BJ (cell line): ENCODE measurements at regions of chr2 and their contacts with region 1.

Region 1: GRCh38 chr2:207473049-207473930 is 56.5 kb upstream of the CREB1 start:
- DNase-seq: peak; percentile 42
- H3K4me3 ChIP-seq: no peak overlapping the region
- H3K27me3 ChIP-seq: no peaks in the 10 kb centered on the region
- CTCF ChIP-seq: peak; percentile 82

Region 2: GRCh38 chr2:206693399-206694137 is 779.7 kb before region 1 on chr2:
- CTCF ChIA-PET with region 1: interaction called, 12 read pairs
- POLR2A ChIA-PET with region 1: no interaction called
- DNase-seq: peak; percentile 7
- H3K4me3 ChIP-seq: no peak overlapping the region
- H3K27me3 ChIP-seq: peaks cover 2% of the 10 kb centered on the region; the same call in 1 of the 2 replicates
- CTCF ChIP-seq: peak; percentile 59

Region 3: DNA sequence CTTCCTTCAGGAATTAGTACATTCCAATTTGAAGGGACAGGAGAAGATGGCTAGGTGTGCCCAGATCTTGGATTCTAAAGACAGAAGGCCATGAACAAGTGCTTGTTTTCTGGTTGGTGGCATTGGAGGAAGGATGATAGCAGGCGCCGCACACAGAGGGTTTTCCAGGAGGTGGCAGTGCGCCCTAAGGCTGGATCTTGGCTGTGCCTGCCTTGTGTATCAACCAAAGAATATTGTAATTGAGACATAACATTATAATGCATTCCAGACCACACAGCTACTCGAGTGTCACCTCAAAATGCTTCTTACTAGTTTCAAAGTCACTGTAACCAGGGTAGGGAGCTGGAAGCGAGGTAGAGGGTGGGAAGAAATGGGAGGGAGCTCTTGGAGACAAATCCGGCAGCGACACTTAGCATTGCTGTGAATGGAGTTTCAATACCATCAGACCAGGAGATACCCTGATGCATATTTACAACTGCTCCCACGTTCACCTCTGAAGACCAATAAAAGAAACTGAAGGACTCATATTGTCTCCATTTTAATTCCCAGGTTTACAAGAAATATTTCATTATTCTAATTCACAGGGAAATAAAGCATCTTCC is 491.4 kb before region 1 on chr2:
- CTCF ChIA-PET with region 1: interaction called, 84 read pairs
- POLR2A ChIA-PET with region 1: interaction called, 3 read pairs
- DNase-seq: no peak
- H3K4me3 ChIP-seq: no peak overlapping the region
- H3K27me3 ChIP-seq: no peaks in the 10 kb centered on the region
- CTCF ChIP-seq: peak; percentile 91

Region 4: GRCh38 chr2:207155516-207156444 is 317.5 kb before region 1 on chr2:
- CTCF ChIA-PET with region 1: interaction called, 11 read pairs
- POLR2A ChIA-PET with region 1: no interaction called
- DNase-seq: no peak
- H3K4me3 ChIP-seq: no peak overlapping the region
- H3K27me3 ChIP-seq: no peaks in the 10 kb centered on the region
- CTCF ChIP-seq: no peak

Region 5: DNA sequence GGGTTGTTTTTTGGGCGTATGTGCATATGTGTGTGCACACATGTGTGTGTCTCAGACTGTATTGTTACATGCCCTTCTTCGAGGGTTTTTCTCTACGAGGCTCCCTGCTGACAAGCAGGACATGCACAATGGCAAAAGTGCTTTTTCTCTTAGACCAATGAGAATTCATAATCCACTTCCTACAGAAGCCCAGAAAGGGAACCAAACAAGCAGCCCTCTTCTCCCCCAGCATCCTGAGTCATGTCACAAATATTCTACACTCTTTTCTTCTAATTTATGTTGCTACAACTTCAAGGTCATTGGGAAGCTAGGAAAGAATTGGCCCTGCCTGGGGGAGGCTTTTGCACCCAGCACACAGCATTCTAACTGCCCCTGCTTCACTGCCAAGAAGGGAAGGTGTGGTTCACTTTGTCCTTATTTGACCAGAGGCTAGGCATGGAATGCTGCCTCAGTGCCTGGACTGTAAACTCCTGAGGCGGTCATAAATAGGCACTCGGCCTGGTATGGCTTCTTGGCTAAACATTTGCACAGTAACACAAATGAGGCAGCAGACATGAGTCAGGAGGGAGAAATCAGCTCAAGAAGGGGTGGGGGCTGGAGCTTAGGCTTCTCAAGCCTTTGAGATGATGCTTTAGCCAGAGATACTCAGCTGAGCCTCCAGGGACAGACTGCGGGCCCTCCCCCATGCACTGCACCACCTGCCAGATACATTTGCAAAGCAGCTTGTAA is 214.9 kb before region 1 on chr2:
- CTCF ChIA-PET with region 1: interaction called, 13 read pairs
- POLR2A ChIA-PET with region 1: no interaction called
- DNase-seq: peak; percentile 100
- H3K4me3 ChIP-seq: no peak overlapping the region
- H3K27me3 ChIP-seq: no peaks in the 10 kb centered on the region
- CTCF ChIP-seq: peak; percentile 30; the same call in 1 of the 2 replicates

Region 6: GRCh38 chr2:207513551-207514257 is 40.4 kb after region 1 on chr2:
- CTCF ChIA-PET with region 1: no interaction called
- POLR2A ChIA-PET with region 1: no interaction called
- DNase-seq: peak; percentile 100
- H3K4me3 ChIP-seq: no peak overlapping the region
- H3K27me3 ChIP-seq: no peaks in the 10 kb centered on the region
- CTCF ChIP-seq: no peak

Region 7: DNA sequence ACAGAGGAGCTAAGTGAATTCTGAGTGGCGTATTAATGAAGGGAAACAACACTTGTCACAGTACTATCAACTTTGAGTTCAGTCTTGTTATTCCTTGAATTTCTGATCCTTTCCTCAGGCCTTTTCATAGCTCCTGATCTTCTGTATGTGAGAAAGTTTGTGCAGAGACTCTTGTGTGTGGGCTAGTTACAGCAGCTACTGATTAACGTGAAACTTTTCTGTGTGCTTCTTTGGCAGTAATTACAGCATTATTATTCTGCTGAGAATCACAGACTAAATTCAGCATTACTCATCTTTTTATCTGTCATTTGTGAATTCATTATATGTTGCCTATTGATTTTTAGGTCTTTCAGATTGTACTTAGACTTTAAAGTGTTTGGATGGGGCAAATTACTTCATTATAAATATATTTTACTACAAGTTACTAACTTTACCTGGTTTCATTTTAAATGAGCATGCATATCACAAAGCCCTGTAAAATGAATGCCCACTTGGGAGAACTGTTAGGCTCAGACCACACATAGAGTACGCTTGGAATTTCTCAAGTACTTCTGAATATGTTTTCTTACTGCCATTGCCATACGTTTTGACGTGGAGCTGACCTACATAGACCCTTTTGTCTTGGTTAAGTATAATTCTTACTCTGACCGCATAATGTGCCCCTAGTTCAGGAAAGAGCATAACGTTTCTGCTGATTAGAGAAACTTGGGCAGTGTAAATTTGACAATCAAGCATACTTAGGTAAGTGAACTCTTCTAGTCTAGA is 92.6 kb after region 1 on chr2:
- CTCF ChIA-PET with region 1: no interaction called
- POLR2A ChIA-PET with region 1: no interaction called
- DNase-seq: no peak
- H3K4me3 ChIP-seq: no peak overlapping the region
- H3K27me3 ChIP-seq: no peaks in the 10 kb centered on the region
- CTCF ChIP-seq: no peak